Psoas muscle (tissue), 8 donors: ENCODE measurements at regions of chr5 and their contacts with region 1.

Region 1: DNA sequence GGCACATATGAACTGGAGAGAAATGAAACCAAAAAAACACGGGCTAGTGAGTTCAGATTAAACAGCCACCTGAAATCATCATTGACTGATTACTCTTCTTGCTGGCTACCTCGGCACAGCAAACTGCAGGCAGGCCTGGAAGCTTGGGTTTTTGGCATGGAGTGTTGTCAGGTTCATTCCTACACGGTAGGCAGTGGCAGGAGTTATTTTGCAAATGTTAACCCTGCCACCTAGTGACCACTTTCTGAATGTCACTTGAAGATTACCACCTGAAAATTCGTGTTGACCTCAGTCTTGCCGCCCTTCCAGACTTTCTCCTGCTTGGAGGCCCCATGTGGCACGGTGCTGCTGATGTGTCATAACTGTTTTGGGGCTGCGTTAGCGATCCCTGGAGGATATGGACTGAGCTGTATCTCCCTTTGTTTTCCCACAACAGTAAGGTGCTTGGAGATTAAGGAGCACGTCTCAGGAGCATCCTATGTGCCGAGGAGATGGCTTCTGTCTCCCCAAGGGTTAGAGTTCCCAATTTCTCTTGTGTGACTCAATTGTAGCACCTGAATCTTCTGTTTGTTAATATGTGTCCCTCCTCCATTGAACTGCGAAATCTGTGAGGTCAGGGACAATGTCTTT is 12.7 kb upstream of the CD180 start:
- DNase-seq: no peak
- ATAC-seq: peak; percentile 81 to 93 (median 92)
- H3K4me3 ChIP-seq: no peak overlapping the region
- H3K27ac ChIP-seq: no peak overlapping the region
- H3K4me1 ChIP-seq: no peaks in the 10 kb centered on the region
- H3K27me3 ChIP-seq: no peaks in the 10 kb centered on the region
- CTCF ChIP-seq: peak; percentile 85

Region 2: DNA sequence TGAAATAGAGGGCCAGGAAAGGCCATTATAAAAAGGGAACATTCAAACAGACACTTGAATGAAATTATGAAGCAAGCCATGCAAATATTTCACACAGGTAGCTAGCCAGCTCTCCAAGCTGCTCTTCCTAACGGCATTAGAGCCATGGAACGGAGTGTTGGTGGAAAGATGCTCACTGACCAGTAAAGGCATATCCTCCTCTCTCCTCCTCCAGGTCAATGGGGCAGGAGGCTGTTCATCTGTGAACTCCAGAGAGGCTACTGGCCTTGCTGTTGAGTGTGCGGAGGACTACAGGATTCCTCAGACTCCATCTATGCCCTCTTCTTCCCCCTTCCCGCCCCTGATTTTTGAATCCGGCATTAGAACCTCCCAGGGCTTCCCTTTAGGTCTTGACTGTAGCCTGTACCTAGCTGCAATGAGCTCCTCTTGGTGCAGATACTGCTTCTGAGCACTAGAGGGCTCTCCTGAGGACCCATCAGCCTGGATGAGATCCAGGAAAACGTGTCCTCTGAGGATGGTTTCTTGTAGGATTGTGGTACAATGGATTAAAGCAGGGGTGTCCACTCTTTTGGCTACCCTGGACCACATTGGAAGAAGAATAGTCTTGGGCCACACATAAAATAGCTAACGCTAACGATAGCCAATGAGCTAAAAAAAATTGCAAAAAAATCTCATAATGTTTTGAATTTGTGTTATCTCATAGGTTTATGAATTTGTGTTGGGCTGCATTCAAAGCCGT is 903.0 kb before region 1 on chr5:
- intact Hi-C with region 1: loop called in 1 of 2 experiments (anchors 5 kb)
- DNase-seq: no peak
- ATAC-seq: peak; percentile 54 to 92 (median 85)
- H3K4me3 ChIP-seq: no peak overlapping the region
- H3K27ac ChIP-seq: no peak overlapping the region
- H3K4me1 ChIP-seq: no peaks in the 10 kb centered on the region
- H3K27me3 ChIP-seq: peaks cover 0 to 5% (median 0%) of the 10 kb centered on the region in 3 donors
- CTCF ChIP-seq: peak; percentile 65

Region 3: GRCh38 chr5:66814146-66814991 is 394.9 kb before region 1 on chr5:
- intact Hi-C with region 1: loop called (anchors 2 to 5 kb)
- DNase-seq: no peak
- ATAC-seq: no peak
- H3K4me3 ChIP-seq: no peak overlapping the region
- H3K27ac ChIP-seq: no peak overlapping the region
- H3K4me1 ChIP-seq: no peaks in the 10 kb centered on the region
- H3K27me3 ChIP-seq: no peaks in the 10 kb centered on the region
- CTCF ChIP-seq: peak; percentile 71

Region 4: GRCh38 chr5:66987949-66988838 is 221.1 kb before region 1 on chr5:
- intact Hi-C with region 1: loop called in 1 of 2 experiments (anchors 5 kb)
- DNase-seq: no peak
- ATAC-seq: peak; percentile 48 to 71 (median 64)
- H3K4me3 ChIP-seq: no peak overlapping the region
- H3K27ac ChIP-seq: no peak overlapping the region
- H3K4me1 ChIP-seq: peaks cover 10% of the 10 kb centered on the region
- H3K27me3 ChIP-seq: no peaks in the 10 kb centered on the region
- CTCF ChIP-seq: peak; percentile 89

Region 5: DNA sequence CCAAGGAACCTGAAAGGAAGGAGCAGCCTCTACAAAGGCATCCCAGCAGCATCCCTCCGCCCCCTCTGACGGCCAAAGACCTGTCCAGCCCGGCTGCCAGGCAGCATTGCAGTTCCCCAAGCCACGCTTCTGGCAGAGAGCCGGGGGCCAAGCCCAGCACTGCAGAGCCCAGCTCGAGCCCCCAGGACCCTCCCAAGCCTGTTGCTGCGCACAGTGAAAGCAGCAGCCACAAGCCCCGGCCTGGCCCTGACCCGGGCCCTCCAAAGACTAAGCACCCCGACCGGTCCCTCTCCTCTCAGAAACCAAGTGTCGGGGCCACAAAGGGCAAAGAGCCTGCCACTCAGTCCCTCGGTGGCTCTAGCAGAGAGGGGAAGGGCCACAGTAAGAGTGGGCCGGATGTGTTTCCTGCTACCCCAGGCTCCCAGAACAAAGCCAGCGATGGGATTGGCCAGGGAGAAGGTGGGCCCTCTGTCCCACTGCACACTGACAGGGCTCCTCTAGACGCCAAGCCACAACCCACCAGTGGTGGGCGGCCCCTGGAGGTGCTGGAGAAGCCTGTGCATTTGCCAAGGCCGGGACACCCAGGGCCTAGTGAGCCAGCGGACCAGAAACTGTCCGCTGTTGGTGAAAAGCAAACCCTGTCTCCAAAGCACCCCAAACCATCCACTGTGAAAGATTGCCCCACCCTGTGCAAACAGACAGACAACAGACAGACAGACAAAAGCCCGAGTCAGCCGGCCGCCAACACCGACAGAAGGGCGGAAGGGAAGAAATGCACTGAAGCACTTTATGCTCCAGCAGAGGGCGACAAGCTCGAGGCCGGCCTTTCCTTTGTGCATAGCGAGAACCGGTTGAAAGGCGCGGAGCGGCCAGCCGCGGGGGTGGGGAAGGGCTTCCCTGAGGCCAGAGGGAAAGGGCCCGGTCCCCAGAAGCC is 43.5 kb before region 1 on chr5:
- intact Hi-C with region 1: loop called (anchors 2 kb)
- DNase-seq: peak; percentile 86 to 90
- ATAC-seq: peak; percentile 56 to 93 (median 82)
- H3K4me3 ChIP-seq: peak overlapping the region; percentile 46
- H3K27ac ChIP-seq: peak overlapping the region; percentile 61
- H3K4me1 ChIP-seq: no peaks in the 10 kb centered on the region
- H3K27me3 ChIP-seq: no peaks in the 10 kb centered on the region
- CTCF ChIP-seq: peak; percentile 52